ENCODE measurements at regions of chr6 and their contacts with region 1.

Region 1: DNA sequence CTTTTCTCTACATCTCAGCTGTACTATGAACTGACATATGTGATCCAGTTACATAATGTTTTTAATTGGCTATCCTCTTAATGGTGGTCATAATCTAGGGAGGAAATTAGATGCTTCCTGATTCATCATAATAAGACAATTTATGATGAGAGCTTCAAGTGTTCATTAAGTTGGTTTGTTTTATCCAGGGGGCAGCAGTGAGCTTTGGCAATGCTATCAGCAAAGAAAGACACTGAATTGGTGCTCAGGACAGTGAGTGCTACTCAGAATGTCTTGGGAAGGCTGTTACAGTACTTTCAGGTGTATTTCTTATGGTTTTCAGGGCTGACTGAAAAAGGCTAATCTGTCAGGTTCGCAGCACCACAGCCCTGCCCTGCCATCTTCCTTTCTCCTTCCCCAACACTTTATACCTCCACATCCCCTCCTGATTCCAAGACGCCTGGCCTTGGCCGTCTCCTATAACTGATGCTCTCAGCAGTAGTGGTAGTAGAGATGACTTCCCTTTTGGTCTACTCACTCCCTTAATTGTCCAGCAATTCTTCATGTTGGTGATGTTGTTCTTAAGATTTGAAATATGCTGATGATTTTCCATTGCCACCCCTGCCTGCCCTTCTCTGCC is 67.0 kb upstream of the TNFAIP3 start:
- DNase-seq: peak; percentile 84
- H3K4me3 Mint-ChIP-seq: no peak overlapping the region
- H3K27ac Mint-ChIP-seq: no peak overlapping the region
- H3K4me1 Mint-ChIP-seq: peaks cover 30% of the 10 kb centered on the region
- H3K27me3 Mint-ChIP-seq: no peaks in the 10 kb centered on the region
- CTCF ChIP-seq: peak; percentile 56

Region 2: DNA sequence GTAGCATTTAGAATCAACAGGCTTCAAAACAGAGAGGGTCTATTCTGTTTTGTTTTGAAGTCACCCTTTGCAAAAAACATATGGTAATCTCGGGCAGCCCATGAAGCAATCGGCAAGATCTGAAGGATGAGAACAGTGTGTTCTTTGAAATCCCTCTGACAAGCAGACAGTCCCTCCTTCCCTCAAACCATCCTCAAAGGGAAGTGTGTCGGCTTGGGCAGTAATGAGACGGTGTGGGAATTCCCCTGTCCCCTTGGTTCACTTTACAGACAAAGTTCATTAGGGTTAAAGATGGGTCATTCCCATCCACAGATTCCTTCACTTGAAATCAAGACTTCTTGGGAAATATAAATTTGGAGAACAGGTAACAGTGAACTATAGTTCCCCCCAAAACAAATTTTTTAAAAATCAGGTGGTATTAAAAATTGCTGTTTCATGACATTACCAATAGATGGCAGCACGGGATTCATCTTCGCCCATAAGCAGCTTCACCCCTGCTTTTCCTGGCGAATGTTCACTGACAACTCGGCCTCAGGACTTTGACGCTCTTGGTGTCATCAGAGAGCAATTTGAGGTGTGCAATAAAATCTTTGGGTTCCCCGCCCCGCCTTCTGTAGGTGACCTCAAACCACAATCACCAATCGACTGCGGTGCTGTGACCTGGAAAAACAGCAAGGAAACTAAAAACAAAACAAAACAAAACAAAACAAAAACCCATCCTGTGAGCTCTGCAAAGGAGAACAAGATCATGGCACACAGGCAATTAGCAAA is 92.3 kb before region 1 on chr6:
- CTCF ChIA-PET with region 1: interaction called, 12 read pairs
- POLR2A ChIA-PET with region 1: interaction called, 3 read pairs
- intact Hi-C with region 1: loop called (anchors 1 kb)
- DNase-seq: peak; percentile 88
- H3K4me3 Mint-ChIP-seq: peak overlapping the region; percentile 60
- H3K27ac Mint-ChIP-seq: peak overlapping the region; percentile 67
- H3K4me1 Mint-ChIP-seq: peaks cover 14% of the 10 kb centered on the region
- H3K27me3 Mint-ChIP-seq: no peaks in the 10 kb centered on the region
- CTCF ChIP-seq: peak; percentile 64

Region 3: DNA sequence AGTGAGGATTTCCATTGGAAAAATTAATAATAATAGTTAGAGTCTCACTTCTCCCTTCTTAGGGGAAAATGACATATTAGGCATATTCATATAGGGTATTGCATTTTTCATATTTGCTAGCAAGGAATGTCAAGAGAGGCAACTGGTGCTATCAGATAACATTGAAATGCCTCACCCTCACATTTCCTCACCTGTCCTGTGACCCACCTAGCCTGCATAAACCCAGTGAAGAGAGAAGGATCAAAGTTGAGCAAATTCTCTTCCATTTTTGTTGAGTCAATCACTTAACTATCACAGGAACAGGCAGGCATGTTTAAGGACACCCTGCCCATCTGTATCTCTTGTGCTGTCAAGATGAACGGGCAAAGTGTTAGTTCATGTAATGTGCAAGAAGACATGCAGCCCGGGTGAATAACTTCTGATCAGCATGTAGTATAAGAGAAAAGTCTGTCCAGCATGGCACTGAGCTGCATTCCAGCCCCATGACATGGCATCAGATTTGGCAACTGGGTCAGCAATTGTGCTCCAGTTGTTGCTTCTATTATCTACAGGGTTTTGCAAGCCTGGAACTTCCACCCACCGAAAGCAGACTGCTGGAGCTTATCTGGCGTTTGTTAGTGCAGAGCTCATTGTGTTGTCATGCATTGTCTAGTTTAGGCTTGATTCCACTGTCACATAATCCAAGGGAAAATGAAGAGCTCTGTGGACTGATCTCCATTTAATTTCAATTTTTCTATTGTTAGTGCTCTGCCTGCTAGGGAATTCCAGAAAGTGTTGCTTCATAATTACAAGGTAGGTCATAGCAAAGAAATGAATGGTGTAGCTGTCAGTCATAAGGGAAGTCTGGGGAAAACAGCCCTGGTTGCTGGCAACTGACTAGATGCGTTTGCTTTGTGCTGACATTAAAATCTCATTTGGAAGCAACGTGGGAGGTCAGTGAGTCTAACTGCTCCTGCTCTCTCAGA is 71.4 kb before region 1 on chr6:
- CTCF ChIA-PET with region 1: interaction called, 10 read pairs
- POLR2A ChIA-PET with region 1: interaction called, 7 read pairs
- intact Hi-C with region 1: no loop called
- DNase-seq: peak; percentile 95
- H3K4me3 Mint-ChIP-seq: peak overlapping the region; percentile 22
- H3K27ac Mint-ChIP-seq: peak overlapping the region; percentile 73
- H3K4me1 Mint-ChIP-seq: peaks cover 37% of the 10 kb centered on the region
- H3K27me3 Mint-ChIP-seq: no peaks in the 10 kb centered on the region
- CTCF ChIP-seq: no peak

Region 4: GRCh38 chr6:137788248-137788647 is 11.8 kb before region 1 on chr6:
- CTCF ChIA-PET with region 1: interaction called, 13 read pairs
- POLR2A ChIA-PET with region 1: no interaction called
- intact Hi-C with region 1: no loop called
- DNase-seq: no peak
- H3K4me3 Mint-ChIP-seq: no peak overlapping the region
- H3K27ac Mint-ChIP-seq: no peak overlapping the region
- H3K4me1 Mint-ChIP-seq: no peaks in the 10 kb centered on the region
- H3K27me3 Mint-ChIP-seq: no peaks in the 10 kb centered on the region
- CTCF ChIP-seq: no peak

Region 5: DNA sequence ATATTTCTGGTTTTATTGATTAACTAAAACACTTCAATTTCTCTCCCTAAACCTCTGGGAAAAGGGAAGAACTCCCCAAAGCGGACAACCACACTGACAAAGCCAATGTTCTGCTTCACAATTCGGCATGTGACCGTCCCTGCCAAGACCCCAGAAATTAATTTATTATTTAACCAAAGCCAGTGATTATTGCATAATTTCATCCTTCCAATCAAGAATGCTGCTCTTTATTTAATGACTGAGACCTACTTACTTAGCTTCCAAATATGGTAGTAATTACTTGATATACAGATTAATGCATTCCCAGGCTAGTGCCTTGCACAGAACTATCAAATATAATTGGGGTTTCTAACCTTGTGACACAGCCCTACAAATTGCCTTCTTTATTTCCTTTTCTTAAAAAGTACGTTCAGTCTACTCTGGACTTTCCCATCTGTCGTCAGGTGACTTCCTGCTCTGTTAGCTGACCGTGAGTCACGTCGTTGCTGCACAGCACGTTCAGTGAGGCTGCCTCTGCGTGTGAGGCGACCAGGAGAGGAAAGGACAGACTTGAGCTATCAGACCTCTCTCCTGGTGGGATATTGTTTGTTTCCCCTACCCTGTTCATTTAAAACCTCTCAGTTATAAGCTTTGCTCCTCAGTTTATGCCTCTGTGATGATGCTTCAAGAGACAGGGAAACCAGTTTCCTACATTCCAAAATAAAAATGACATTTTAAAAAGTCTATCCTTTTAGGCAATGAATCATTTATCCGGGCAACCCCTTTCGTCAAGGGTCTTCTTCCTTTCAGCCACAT is 11.3 kb after region 1 on chr6:
- CTCF ChIA-PET with region 1: interaction called, 25 read pairs
- POLR2A ChIA-PET with region 1: interaction called, 10 read pairs
- intact Hi-C with region 1: no loop called
- DNase-seq: peak; percentile 92
- H3K4me3 Mint-ChIP-seq: peak overlapping the region; percentile 58
- H3K27ac Mint-ChIP-seq: peak overlapping the region; percentile 94
- H3K4me1 Mint-ChIP-seq: peaks cover 55% of the 10 kb centered on the region
- H3K27me3 Mint-ChIP-seq: no peaks in the 10 kb centered on the region
- CTCF ChIP-seq: no peak

Region 6: DNA sequence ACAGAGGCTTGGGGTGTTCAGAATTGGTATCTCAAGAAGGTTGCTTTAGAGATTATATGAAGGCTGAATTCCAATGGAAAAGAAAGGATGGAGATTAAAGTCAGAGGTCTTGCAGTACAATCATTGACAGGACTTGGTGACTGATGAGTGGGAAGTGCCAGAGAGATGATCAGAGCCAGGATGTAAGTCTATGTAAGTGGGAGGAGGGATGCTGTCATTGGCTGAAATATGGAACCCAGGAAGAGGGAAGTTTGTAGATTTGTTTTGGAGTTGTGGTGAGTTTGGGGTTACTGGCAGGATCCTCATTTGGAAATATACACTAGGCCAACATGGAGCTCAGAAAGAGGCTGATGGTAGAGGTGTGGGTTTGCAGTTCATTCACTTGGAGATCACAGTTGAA is 43.2 kb after region 1 on chr6:
- CTCF ChIA-PET with region 1: no interaction called
- POLR2A ChIA-PET with region 1: no interaction called
- intact Hi-C with region 1: no loop called
- DNase-seq: no peak
- H3K4me3 Mint-ChIP-seq: no peak overlapping the region
- H3K27ac Mint-ChIP-seq: no peak overlapping the region
- H3K4me1 Mint-ChIP-seq: peaks cover 7% of the 10 kb centered on the region
- H3K27me3 Mint-ChIP-seq: no peaks in the 10 kb centered on the region
- CTCF ChIP-seq: no peak

Region 7: DNA sequence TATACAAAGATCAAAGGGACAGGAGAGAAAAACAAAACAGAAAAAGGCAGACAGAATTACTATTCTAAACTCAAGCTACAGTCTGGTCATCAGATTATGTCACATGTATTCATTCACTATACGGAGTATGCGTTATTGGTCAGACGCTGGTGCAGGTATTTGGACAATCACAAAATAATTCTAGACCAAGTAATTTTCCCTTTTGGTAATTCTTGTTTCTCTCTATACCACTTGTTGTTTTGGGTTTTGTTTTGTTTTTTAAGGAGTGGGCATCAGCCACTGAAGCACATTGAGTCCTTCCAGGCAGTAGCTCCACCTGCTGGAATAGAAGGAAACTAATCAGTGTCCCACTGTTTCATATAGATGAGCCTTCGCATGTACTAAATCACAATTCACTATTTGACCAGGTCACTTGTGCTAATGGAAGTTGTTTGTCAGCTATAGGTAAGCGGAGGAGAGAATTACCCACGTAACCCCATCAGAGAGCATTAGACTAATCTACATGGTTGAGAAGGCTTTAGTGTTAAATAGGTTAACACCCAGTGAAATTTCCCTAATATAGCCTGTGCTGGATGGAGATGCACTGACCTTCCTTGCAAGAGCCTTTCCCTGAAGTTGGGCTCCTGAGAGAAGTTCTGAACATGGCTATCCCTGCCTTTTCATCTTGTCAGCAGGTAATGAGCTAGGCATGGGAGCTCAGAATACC is 144.9 kb after region 1 on chr6:
- CTCF ChIA-PET with region 1: interaction called, 13 read pairs
- POLR2A ChIA-PET with region 1: interaction called, 5 read pairs
- intact Hi-C with region 1: loop called (anchors 1 kb)
- DNase-seq: peak; percentile 55
- H3K4me3 Mint-ChIP-seq: no peak overlapping the region
- H3K27ac Mint-ChIP-seq: peak overlapping the region; percentile 82
- H3K4me1 Mint-ChIP-seq: peaks cover 19% of the 10 kb centered on the region
- H3K27me3 Mint-ChIP-seq: no peaks in the 10 kb centered on the region
- CTCF ChIP-seq: peak; percentile 72

Region 8: GRCh38 chr6:137975188-137975940 is 175.3 kb after region 1 on chr6:
- CTCF ChIA-PET with region 1: interaction called, 4 read pairs
- POLR2A ChIA-PET with region 1: no interaction called
- intact Hi-C with region 1: loop called (anchors 1 kb)
- DNase-seq: peak; percentile 29
- H3K4me3 Mint-ChIP-seq: no peak overlapping the region
- H3K27ac Mint-ChIP-seq: no peak overlapping the region
- H3K4me1 Mint-ChIP-seq: peaks cover 11% of the 10 kb centered on the region
- H3K27me3 Mint-ChIP-seq: no peaks in the 10 kb centered on the region
- CTCF ChIP-seq: peak; percentile 53

Region 9: DNA sequence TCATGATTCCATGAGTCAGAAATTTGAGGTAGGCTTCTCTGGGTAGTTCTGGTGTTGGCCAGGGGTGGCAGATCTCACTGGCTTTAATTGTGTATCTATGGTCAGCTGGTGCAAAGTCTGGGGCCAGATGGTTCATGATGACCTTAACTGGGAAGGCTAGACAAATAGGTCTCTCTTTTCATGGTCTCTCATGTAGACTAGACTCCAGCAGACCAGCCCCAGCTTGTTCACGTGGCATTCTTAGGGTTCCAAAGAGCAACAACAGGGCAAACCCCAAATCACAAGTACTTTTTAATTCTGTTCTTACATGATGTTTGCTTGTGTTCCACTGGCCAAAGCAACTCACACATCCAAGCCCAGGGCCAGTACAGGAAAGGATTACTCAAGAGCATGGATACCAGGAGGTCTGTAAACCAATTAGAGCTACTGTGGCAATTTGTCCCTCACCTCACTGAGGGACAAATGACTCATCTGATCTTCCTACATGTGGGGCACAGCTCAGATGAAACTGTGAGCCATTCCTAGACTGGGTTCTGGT is 497.8 kb after region 1 on chr6:
- CTCF ChIA-PET with region 1: no interaction called
- POLR2A ChIA-PET with region 1: no interaction called
- intact Hi-C with region 1: no loop called
- DNase-seq: peak; percentile 45
- H3K4me3 Mint-ChIP-seq: no peak overlapping the region
- H3K27ac Mint-ChIP-seq: no peak overlapping the region
- H3K4me1 Mint-ChIP-seq: peaks cover 8% of the 10 kb centered on the region
- H3K27me3 Mint-ChIP-seq: no peaks in the 10 kb centered on the region
- CTCF ChIP-seq: no peak